ENCODE measurements at regions of chr5 and their contacts with region 1.

Region 1: GRCh38 chr5:14142827-14143548 is at the start of gene TRIO:
- DNase-seq: peak; percentile 94 to 98
- ATAC-seq: peak; percentile 95
- H3K4me3 ChIP-seq: peak within 1 kb of the TSS; percentile 64 to 75
- H3K27ac ChIP-seq: peak within 1 kb of the TSS; percentile 81 to 82
- H3K4me1 ChIP-seq: peaks cover 0 to 6% of the 10 kb centered on the region in 2 donors
- H3K27me3 ChIP-seq: no peaks in the 10 kb centered on the region
- total RNA-seq, gene TRIO: 346 to 374 TPM

Region 2: GRCh38 chr5:14035859-14036440 is 107.0 kb before region 1 on chr5:
- intact Hi-C with region 1: loop called in 1 of 2 experiments (anchors 5 kb)
- DNase-seq: peak in 1 of 2 donors; percentile 62
- ATAC-seq: peak; percentile 88
- H3K4me3 ChIP-seq: no peak overlapping the region
- H3K27ac ChIP-seq: peak overlapping the region in 1 of 2 donors; percentile 48
- H3K4me1 ChIP-seq: peaks cover 0 to 2% of the 10 kb centered on the region in 2 donors
- H3K27me3 ChIP-seq: no peaks in the 10 kb centered on the region

Region 3: GRCh38 chr5:14190194-14191164 is 47.5 kb after region 1 on chr5:
- intact Hi-C with region 1: loop called (anchors 2 kb)
- DNase-seq: peak; percentile 82 to 88
- ATAC-seq: peak; percentile 88
- H3K4me3 ChIP-seq: peak overlapping the region in 1 of 2 donors; percentile 11
- H3K27ac ChIP-seq: peak overlapping the region; percentile 95 to 96
- H3K4me1 ChIP-seq: peaks cover 0 to 6% of the 10 kb centered on the region in 2 donors
- H3K27me3 ChIP-seq: no peaks in the 10 kb centered on the region

Region 4: GRCh38 chr5:14264604-14265316 is 121.8 kb after region 1 on chr5:
- intact Hi-C with region 1: loop called in 1 of 2 experiments (anchors 5 kb)
- DNase-seq: peak; percentile 94 to 97
- ATAC-seq: peak; percentile 93
- H3K4me3 ChIP-seq: no peak overlapping the region
- H3K27ac ChIP-seq: no peak overlapping the region
- H3K4me1 ChIP-seq: peaks cover 10 to 20% of the 10 kb centered on the region in 2 donors
- H3K27me3 ChIP-seq: no peaks in the 10 kb centered on the region

Region 5: GRCh38 chr5:14270209-14270702 is 127.3 kb after region 1 on chr5:
- intact Hi-C with region 1: loop called (anchors 1 to 5 kb)
- DNase-seq: peak in 1 of 2 donors; percentile 70
- ATAC-seq: peak; percentile 87
- H3K4me3 ChIP-seq: no peak overlapping the region
- H3K27ac ChIP-seq: peak overlapping the region in 1 of 2 donors; percentile 37
- H3K4me1 ChIP-seq: peaks cover 10 to 14% of the 10 kb centered on the region in 2 donors
- H3K27me3 ChIP-seq: no peaks in the 10 kb centered on the region

Measured in aorta (tissue), 5 donors.